ENCODE measurements at regions of chr1 and their contacts with region 1.

Region 1: GRCh38 chr1:27044613-27045151 is 32.0 kb upstream of the TENT5B start:
- DNase-seq: peak; percentile 87
- CTCF ChIP-seq: peak; percentile 99

Region 2: GRCh38 chr1:26993237-26994019 is 51.3 kb before region 1 on chr1 and contains the start of gene TRNP1:
- CTCF ChIA-PET with region 1: interaction called, 52 read pairs
- POLR2A ChIA-PET with region 1: no interaction called
- DNase-seq: peak; percentile 94
- CTCF ChIP-seq: no peak

Region 3: DNA sequence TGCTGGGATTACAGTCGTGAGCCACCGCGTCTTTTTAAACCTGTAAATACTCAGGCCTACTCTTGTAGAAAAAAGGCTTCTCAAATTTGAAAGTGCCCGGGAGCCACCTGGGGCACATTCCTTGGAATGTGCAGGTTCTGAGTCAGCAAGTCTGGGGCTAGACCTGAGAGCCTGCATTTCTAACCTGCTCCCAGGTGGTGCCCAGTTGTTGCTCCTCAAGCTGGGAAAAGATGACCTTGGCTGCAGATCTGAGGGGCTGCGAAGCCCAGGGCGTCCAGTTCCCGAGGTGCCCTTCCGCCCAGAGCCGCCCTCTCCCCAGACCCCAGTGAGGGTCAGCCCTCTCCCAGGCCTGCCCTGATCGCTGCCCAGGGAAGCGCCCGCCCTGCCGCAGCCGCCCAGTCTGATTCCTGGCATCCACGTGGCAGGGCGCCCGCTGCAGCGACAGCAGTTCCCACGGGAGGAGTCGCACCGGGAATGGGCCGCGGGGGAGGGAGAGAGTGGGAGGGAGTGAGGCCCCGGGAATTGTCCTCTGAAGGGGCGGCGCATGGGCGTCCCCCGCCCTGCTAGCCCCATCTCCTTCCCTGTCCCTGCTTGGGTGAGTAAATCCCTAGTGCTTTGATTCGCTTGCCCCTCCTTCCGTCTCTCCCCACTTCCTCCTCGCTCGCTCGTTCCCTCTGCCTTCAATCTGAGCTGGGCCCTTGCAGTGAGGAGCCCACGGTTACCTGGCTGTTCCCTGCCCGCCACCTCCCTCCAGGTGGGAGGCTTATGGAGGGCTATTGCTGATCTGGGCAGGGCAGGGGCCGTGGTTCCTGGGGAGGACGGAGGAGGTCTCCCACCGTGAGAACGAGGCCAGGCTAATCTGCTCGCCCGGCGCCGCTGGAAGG is 13.2 kb before region 1 on chr1:
- CTCF ChIA-PET with region 1: interaction called, 64 read pairs
- POLR2A ChIA-PET with region 1: no interaction called
- DNase-seq: no peak
- CTCF ChIP-seq: no peak

Region 4: GRCh38 chr1:27057801-27058625 is 13.3 kb after region 1 on chr1:
- CTCF ChIA-PET with region 1: interaction called, 93 read pairs
- POLR2A ChIA-PET with region 1: no interaction called
- DNase-seq: no peak
- CTCF ChIP-seq: no peak

Region 5: DNA sequence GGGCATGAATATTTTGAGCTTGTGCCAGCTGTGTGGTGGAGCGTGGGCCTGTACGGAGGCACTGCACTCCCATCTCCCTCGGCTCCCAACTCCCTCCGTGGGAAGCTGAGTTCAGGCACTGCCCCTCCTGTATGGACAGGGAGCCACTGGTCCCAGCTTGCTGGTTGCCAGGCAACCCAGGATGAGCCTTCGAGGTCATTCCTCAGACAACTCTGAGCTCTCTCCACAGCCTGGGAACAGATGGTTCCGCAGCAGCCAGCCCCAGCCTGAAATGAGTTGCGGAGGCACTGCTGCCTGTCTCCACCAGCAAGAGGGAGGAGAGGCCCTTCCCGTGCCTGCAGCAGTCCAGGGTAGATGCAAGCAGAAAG is 26.4 kb after region 1 on chr1:
- CTCF ChIA-PET with region 1: interaction called, 27 read pairs
- POLR2A ChIA-PET with region 1: no interaction called
- DNase-seq: no peak
- CTCF ChIP-seq: no peak

Region 6: GRCh38 chr1:27111626-27112573 is 67.2 kb after region 1 on chr1:
- CTCF ChIA-PET with region 1: interaction called, 19 read pairs
- POLR2A ChIA-PET with region 1: no interaction called
- DNase-seq: peak; percentile 87
- CTCF ChIP-seq: peak; percentile 52

Measured in GM10248 (cell line).